Heart right ventricle (tissue), 16 donors: ENCODE measurements at regions of chr17 and their contacts with region 1.

Region 1: GRCh38 chr17:57255776-57256681 is at the start of gene MSI2:
- DNase-seq: peak; percentile 94 to 95
- ATAC-seq: peak; percentile 88 to 94 (median 92)
- H3K4me3 ChIP-seq: peak within 1 kb of the TSS; percentile 75 to 97 (median 93)
- H3K27ac ChIP-seq: peak within 1 kb of the TSS; percentile 88 to 99 (median 97)
- H3K4me1 ChIP-seq: peaks cover 0 to 38% (median 20%) of the 10 kb centered on the region in 9 donors
- H3K27me3 ChIP-seq: peaks cover 0 to 4% (median 0%) of the 10 kb centered on the region in 7 donors
- CTCF ChIP-seq: peak in 1 of 9 donors; percentile 5
- total RNA-seq, gene MSI2: 94.2 to 135 (median 121) TPM

Region 2: DNA sequence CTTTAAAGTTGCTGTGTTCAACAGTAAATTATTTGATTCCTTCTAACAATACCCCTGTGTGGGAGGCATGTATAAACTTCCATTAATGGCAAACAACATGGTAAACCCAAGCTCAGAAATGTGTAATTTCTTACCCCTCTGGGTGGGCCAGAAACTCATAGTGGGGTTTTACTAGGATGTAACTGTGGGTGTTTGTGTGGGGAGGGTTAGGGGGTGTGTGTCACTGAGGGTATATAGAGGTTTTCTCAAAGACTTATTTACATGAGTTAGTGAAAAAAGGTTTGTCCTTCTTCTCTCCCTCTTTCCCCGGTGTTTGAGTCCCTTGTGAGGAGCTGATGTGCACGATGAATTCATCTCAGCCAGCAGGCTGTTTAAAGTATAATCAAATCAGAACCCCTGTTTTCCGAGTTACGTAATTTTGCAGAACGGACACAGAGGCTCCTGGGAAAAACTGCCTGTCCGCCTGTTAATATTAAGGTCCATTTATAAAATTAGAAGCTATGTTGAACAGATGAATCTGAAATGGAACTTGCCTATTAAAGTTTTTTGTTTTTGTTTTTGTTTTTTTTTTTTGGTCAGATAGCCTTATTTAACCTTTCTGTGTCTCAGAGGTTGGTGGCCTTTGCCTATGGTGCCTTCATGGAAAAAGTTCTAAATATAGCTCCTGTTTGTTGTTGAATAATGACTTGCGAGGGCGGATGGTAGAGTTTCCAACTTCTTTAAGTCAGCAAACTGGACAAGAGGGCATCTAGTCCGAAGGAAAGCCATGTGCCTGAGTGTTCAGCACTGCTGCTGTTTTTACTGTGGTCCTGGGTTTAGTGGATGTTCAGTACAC is 73.6 kb after region 1 on chr17:
- intact Hi-C with region 1: loop called in 2 of 10 experiments (anchors 5 to 10 kb)
- DNase-seq: peak in 1 of 2 donors; percentile 41
- ATAC-seq: peak; percentile 69 to 85 (median 78)
- H3K4me3 ChIP-seq: no peak overlapping the region
- H3K27ac ChIP-seq: peak overlapping the region; percentile 54 to 85 (median 72)
- H3K4me1 ChIP-seq: peaks cover 10 to 51% (median 25%) of the 10 kb centered on the region in 9 donors
- H3K27me3 ChIP-seq: no peaks in the 10 kb centered on the region
- CTCF ChIP-seq: no peak

Region 3: GRCh38 chr17:57379237-57379894 is 123.3 kb after region 1 on chr17:
- intact Hi-C with region 1: loop called in 1 of 10 experiments (anchors 5 kb)
- DNase-seq: peak in 1 of 2 donors; percentile 40
- ATAC-seq: peak; percentile 79 to 90 (median 85)
- H3K4me3 ChIP-seq: peak overlapping the region in 1 of 10 donors; percentile 20
- H3K27ac ChIP-seq: peak overlapping the region; percentile 38 to 84 (median 72)
- H3K4me1 ChIP-seq: peaks cover 8 to 40% (median 23%) of the 10 kb centered on the region in 9 donors
- H3K27me3 ChIP-seq: no peaks in the 10 kb centered on the region
- CTCF ChIP-seq: no peak

Region 4: DNA sequence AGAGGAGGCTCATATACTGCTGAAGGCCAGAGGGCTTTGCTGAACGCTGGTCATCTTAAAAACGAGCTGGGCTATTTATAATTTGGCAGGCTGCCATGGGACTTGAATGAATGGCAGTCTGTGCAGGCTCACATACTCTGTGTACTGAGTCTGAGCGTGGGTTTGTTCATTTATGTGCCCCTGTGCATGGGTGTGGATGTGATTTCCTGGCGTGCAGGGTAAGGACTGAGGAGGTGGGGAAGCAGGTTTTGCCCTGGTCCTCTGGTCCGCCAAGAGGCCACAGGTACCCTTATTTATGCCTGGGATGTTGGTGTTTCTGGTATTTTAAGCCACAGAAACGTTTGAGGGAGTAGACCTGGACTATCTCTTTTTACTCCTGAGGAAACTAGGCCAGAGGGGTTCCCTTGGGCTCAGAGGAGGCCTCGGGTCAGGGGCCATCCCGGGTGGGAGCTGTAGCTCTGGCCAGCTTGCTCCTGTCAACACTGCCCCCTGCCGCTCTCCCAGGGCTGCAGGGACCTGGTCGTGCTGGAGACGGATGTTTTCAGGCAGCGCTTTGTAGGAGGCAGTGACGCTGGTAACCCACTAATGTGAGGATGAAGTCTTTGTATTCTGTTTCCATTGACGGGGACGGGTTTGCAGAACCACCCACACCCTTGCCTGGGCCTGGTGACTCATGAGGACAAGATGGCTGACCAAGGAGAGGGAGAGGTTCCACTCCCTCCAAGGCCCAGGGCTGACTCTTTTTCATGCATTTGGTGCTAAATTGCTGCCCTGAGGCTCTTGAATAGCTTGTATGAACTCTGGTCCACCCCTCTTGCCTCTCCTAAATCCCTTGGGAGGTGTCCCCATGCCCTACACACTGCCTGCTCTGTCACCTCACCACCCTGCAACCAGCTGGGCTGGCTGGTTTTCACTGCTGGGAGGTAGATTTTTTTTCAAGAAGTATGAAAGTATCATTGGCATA is 184.8 kb after region 1 on chr17:
- intact Hi-C with region 1: loop called in 3 of 10 experiments (anchors 5 to 10 kb)
- DNase-seq: peak; percentile 72 to 88
- ATAC-seq: peak; percentile 78 to 89 (median 84)
- H3K4me3 ChIP-seq: no peak overlapping the region
- H3K27ac ChIP-seq: peak overlapping the region; percentile 42 to 83 (median 67)
- H3K4me1 ChIP-seq: peaks cover 23 to 91% (median 61%) of the 10 kb centered on the region in 9 donors
- H3K27me3 ChIP-seq: no peaks in the 10 kb centered on the region
- CTCF ChIP-seq: peak in 8 of 9 donors; percentile 30 to 79 (median 64)

Region 5: DNA sequence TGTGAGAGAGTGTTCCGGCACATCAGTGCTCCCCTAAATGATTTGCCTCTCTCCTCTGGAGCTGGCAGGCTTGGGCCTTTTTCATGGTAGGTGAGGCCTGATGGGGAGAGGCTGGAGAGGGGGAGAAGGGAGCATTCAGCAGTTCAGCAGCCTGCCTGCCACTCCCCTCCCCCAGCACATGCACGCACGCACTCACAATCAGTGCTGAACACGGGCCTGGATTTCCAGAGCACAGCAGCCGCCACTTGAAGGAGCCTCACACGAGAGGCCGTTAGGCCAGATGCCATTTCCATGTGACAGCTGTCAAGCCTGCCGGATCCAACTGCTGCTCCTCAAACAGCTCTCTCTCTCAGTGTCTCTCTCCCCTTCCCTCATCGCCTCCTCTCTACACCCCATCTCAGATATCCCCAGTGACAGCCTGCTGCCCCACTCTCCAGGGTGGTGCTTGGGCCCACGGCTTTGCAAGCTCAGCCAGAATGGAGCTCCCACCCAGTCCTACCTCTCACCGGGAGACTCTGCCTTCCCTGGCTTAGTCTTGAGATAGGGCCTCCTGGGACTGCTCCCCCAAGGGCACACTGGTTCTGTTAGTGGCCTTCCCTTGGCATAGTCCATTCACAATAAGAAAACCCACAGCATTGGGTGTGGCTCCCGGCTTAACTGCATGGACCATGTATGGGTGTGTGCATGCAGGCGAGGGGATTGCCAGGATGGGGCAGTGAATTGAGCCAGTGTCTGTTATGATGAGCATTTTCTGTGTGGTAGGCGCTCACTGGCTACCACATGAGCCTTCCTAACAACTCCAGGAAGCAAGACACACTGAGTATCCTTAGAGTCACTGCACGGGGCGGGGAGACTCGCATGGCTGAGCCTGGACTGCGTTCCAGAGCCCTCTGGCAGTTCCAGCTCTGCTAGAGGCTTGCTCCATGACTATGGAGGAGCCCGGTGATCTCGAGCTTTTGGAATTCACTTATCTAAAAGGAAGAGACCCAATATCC is 262.9 kb after region 1 on chr17:
- intact Hi-C with region 1: loop called in 1 of 10 experiments (anchors 10 kb)
- DNase-seq: peak; percentile 57 to 59
- ATAC-seq: peak; percentile 69 to 89 (median 83)
- H3K4me3 ChIP-seq: no peak overlapping the region
- H3K27ac ChIP-seq: peak overlapping the region in 5 of 10 donors; percentile 10 to 71 (median 45)
- H3K4me1 ChIP-seq: peaks cover 10 to 56% (median 33%) of the 10 kb centered on the region in 9 donors
- H3K27me3 ChIP-seq: no peaks in the 10 kb centered on the region
- CTCF ChIP-seq: no peak

Region 6: DNA sequence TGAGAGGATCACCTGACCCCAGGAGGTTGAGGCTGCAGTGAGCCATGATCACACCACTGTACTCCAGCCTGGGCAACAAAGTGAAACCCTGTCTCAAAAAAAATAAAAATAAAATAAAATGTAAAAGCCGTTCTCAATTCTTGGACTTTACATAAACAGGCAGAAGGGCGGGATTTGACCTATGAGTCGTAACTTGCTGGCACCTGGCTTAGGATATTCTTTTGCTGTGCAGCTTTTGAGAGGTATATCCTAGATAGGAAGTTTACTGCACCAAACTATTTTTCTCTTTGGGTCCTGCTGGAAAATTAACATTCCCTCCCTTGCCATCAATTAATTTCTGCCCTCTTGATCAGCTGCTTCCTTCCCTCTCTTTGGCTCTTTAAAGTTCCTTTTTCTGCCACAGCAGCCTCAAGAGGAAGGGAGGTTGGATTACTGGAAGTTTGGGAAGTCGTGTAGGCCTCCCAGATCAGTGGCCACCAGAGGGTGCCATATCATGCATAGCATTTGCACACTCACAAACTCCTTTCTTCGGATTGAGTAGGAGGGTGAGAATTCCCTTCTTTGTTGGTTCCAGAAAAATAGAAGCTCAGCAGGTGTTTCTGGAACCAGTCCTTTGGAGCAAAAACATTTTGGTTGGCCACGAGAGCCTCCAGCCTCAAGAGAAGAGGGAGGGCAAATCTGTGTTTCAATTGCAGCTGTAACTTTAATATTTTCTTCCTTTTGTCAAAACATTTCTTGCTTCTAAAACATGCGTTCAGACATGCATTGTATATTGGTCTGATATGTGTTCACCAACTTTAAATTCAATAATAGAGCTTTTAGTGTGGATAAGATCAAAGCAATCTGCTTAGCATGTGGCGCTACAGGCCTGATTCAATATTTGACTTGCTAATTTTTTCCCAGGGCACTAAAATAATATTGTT is 341.8 kb after region 1 on chr17:
- intact Hi-C with region 1: loop called in 1 of 10 experiments (anchors 10 kb)
- DNase-seq: peak; percentile 57 to 81
- ATAC-seq: peak in 7 of 8 donors; percentile 39 to 80 (median 71)
- H3K4me3 ChIP-seq: no peak overlapping the region
- H3K27ac ChIP-seq: peak overlapping the region in 8 of 10 donors; percentile 5 to 65 (median 58)
- H3K4me1 ChIP-seq: peaks cover 0 to 57% (median 34%) of the 10 kb centered on the region in 9 donors
- H3K27me3 ChIP-seq: no peaks in the 10 kb centered on the region
- CTCF ChIP-seq: peak; percentile 67 to 93 (median 85)